IMR-90 (cell line): ENCODE measurements at regions of chr3 and their contacts with region 1.

Region 1: GRCh38 chr3:162777111-162777510 is 1280.5 kb downstream of the OTOL1 start:
- DNase-seq: no peak
- ATAC-seq: no peak
- H3K4me3 ChIP-seq: no peak overlapping the region
- H3K27ac ChIP-seq: no peak overlapping the region
- H3K4me1 ChIP-seq: no peaks in the 10 kb centered on the region
- H3K27me3 ChIP-seq: no peaks in the 10 kb centered on the region
- CTCF ChIP-seq: no peak
- POLR2A ChIP-seq: no peak
- RAD21 ChIP-seq: no peak

Region 2: GRCh38 chr3:161274719-161275298 is 1502.3 kb before region 1 on chr3:
- CTCF ChIA-PET with region 1: no interaction called
- POLR2A ChIA-PET with region 1: no interaction called
- dilution Hi-C with region 1: no loop called
- in situ Hi-C with region 1: no loop called
- intact Hi-C with region 1: no loop called
- DNase-seq: peak; percentile 63
- ATAC-seq: peak; percentile 67
- H3K4me3 ChIP-seq: no peak overlapping the region
- H3K27ac ChIP-seq: no peak overlapping the region
- H3K4me1 ChIP-seq: peaks cover 2% of the 10 kb centered on the region; the same call in 1 of the 2 replicates
- H3K27me3 ChIP-seq: no peaks in the 10 kb centered on the region
- CTCF ChIP-seq: peak; percentile 75
- POLR2A ChIP-seq: no peak
- RAD21 ChIP-seq: peak; percentile 66

Region 3: GRCh38 chr3:161905520-161906132 is 871.5 kb before region 1 on chr3:
- CTCF ChIA-PET with region 1: no interaction called
- POLR2A ChIA-PET with region 1: interaction called, 28 read pairs
- dilution Hi-C with region 1: no loop called
- in situ Hi-C with region 1: no loop called
- intact Hi-C with region 1: no loop called
- DNase-seq: no peak
- ATAC-seq: no peak
- H3K4me3 ChIP-seq: no peak overlapping the region
- H3K27ac ChIP-seq: no peak overlapping the region
- H3K4me1 ChIP-seq: no peaks in the 10 kb centered on the region
- H3K27me3 ChIP-seq: no peaks in the 10 kb centered on the region
- CTCF ChIP-seq: no peak
- POLR2A ChIP-seq: no peak
- RAD21 ChIP-seq: no peak

Region 4: DNA sequence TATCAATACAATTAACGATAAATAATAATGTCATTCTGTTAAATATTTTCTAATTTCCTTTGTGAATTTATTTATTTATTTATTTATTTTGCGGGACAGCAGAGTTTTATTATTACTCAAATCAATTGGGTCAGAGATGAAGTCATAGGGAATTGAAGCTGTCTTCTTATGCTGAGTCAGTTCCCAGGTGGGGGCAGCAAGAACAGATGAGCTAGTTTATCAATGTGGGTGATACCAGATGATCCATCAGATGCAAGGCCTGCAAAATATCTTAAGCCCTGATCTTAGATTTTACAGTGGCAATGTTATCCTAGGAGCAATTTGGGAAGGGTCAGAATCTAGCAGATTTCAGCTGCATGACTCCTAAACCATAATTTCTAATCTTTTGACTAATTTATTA is 230.2 kb before region 1 on chr3:
- CTCF ChIA-PET with region 1: no interaction called
- POLR2A ChIA-PET with region 1: no interaction called
- dilution Hi-C with region 1: no loop called
- in situ Hi-C with region 1: no loop called
- intact Hi-C with region 1: no loop called
- DNase-seq: no peak
- ATAC-seq: no peak
- H3K4me3 ChIP-seq: no peak overlapping the region
- H3K27ac ChIP-seq: no peak overlapping the region
- H3K4me1 ChIP-seq: no peaks in the 10 kb centered on the region
- H3K27me3 ChIP-seq: no peaks in the 10 kb centered on the region
- CTCF ChIP-seq: no peak
- POLR2A ChIP-seq: no peak
- RAD21 ChIP-seq: no peak

Region 5: DNA sequence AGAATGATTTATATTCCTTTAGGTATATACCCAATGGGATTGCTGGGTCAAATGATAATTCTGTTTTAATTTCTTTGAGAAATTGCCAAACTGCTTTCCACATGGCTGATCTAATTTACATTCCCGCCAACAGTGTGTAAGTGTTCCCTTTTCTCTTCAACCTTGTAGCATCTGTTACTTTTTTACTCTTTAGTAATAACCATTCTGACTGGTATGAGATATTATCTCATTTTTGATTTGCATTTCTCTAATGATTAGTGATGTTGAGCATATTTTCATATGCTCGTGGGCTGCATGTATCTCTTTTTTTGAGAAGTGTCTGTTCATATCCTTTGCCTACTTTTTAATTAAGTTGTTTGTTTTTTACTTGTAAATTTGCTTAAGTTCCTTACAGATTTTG is 16.3 kb before region 1 on chr3:
- CTCF ChIA-PET with region 1: interaction called, 3 read pairs
- POLR2A ChIA-PET with region 1: interaction called, 11 read pairs
- dilution Hi-C with region 1: no loop called
- in situ Hi-C with region 1: no loop called
- intact Hi-C with region 1: no loop called
- DNase-seq: no peak
- ATAC-seq: no peak
- H3K4me3 ChIP-seq: no peak overlapping the region
- H3K27ac ChIP-seq: no peak overlapping the region
- H3K4me1 ChIP-seq: no peaks in the 10 kb centered on the region
- H3K27me3 ChIP-seq: no peaks in the 10 kb centered on the region
- CTCF ChIP-seq: no peak
- POLR2A ChIP-seq: no peak
- RAD21 ChIP-seq: no peak

Region 6: GRCh38 chr3:162842549-162843216 is 65.6 kb after region 1 on chr3:
- CTCF ChIA-PET with region 1: no interaction called
- POLR2A ChIA-PET with region 1: no interaction called
- dilution Hi-C with region 1: no loop called
- in situ Hi-C with region 1: no loop called
- intact Hi-C with region 1: loop called (anchors 10 kb)
- DNase-seq: no peak
- ATAC-seq: no peak
- H3K4me3 ChIP-seq: no peak overlapping the region
- H3K27ac ChIP-seq: no peak overlapping the region
- H3K4me1 ChIP-seq: no peaks in the 10 kb centered on the region
- H3K27me3 ChIP-seq: no peaks in the 10 kb centered on the region
- CTCF ChIP-seq: no peak
- POLR2A ChIP-seq: no peak
- RAD21 ChIP-seq: no peak

Region 7: DNA sequence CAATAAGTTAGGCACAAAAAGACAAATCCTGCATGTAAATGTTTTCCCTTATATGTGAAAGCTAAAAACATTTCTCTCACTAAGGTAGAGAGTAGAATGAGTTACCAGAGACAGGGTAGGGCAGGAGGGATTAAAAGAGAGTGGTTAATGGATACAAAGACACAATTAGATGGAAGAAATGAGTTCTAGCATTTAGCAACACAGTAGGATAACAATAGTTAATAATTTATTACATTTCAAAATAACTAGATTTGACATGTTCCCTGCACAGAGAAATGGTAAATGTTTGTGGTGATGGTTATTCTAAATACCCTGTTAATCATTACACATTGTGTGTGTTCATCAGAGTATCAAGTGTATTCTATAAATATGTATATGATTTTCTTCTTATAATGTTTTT is 120.2 kb after region 1 on chr3:
- CTCF ChIA-PET with region 1: no interaction called
- POLR2A ChIA-PET with region 1: no interaction called
- dilution Hi-C with region 1: no loop called
- in situ Hi-C with region 1: loop called (anchors 25 kb)
- intact Hi-C with region 1: no loop called
- DNase-seq: no peak
- ATAC-seq: no peak
- H3K4me3 ChIP-seq: no peak overlapping the region
- H3K27ac ChIP-seq: no peak overlapping the region
- H3K4me1 ChIP-seq: no peaks in the 10 kb centered on the region
- H3K27me3 ChIP-seq: no peaks in the 10 kb centered on the region
- CTCF ChIP-seq: no peak
- POLR2A ChIP-seq: no peak
- RAD21 ChIP-seq: no peak

Region 8: DNA sequence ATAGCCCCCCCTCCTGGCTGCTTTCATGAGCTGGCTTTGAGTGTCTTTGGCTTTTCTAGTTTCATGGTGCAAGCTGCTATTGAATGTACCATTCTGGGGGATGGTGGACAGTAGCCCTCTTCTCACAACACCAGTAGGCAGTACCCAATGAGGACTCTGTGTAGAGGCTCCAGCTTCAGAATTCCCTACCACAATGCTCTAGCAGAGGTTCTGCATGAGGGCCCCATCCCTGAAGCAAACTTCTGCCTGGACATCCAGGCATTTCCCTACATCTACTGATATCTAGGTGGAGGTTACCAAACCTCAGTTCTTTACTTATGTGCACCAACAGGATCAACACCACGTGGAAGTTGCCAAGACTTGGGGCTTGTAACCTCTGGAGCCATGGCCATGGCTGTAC is 558.3 kb after region 1 on chr3:
- CTCF ChIA-PET with region 1: no interaction called
- POLR2A ChIA-PET with region 1: no interaction called
- dilution Hi-C with region 1: no loop called
- in situ Hi-C with region 1: no loop called
- intact Hi-C with region 1: no loop called
- DNase-seq: no peak
- ATAC-seq: no peak
- H3K4me3 ChIP-seq: no peak overlapping the region
- H3K27ac ChIP-seq: no peak overlapping the region
- H3K4me1 ChIP-seq: no peaks in the 10 kb centered on the region
- H3K27me3 ChIP-seq: no peaks in the 10 kb centered on the region
- CTCF ChIP-seq: no peak
- POLR2A ChIP-seq: no peak
- RAD21 ChIP-seq: no peak